SK-N-SH (cell line): ENCODE measurements at regions of chr5 and their contacts with region 1.

Region 1: DNA sequence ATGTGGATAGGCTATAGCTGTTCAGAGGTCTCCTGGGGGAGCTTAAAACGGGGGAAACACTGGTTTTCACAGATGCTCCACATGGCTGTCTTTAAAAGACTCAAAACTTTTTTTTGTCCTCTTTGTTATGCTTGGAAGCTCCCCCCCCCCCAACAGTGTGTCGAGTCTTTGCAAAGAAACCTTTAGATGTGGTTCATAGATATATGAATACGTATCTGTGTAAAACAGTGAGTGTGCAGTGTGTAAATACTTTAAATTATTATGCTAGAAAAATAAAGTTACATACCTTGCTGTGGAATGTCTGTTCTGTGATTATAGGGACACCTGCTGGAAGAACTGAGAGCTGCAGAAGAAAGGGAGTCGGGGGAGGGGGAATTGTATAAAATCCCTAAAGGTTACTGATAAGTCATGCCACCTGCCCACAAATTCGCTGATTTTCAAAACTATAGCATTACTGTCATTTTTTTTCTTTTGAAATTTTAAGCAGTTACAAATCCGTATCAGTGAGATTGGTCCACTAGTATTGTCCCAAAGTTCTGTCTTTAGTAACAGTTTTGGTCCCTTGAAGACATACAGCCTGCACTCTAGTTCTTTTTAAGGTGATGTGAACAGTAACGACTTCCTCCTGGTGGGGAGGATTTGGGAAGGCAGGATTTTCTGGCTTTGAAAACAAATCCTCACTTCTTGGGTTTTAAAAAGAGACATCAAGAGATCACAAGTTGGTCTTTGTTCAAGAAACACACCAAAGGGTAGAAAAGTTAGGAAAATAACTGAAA is 22.9 kb downstream of the RGMB start:
- DNase-seq: peak; percentile 68
- H3K4me3 ChIP-seq: no peak overlapping the region; a peak in 1 of 4 replicates
- H3K27ac ChIP-seq: peak overlapping the region in 1 of 2 experiments; percentile 61; a peak in 2 of 4 replicates
- H3K4me1 ChIP-seq: peaks cover 0 to 28% of the 10 kb centered on the region in 2 experiments; a peak in 2 of 4 replicates
- H3K27me3 ChIP-seq: no peaks in the 10 kb centered on the region
- CTCF ChIP-seq: peak; percentile 85
- EP300 ChIP-seq: no peak; a peak in 1 of 4 replicates
- RAD21 ChIP-seq: peak; percentile 80

Region 2: DNA sequence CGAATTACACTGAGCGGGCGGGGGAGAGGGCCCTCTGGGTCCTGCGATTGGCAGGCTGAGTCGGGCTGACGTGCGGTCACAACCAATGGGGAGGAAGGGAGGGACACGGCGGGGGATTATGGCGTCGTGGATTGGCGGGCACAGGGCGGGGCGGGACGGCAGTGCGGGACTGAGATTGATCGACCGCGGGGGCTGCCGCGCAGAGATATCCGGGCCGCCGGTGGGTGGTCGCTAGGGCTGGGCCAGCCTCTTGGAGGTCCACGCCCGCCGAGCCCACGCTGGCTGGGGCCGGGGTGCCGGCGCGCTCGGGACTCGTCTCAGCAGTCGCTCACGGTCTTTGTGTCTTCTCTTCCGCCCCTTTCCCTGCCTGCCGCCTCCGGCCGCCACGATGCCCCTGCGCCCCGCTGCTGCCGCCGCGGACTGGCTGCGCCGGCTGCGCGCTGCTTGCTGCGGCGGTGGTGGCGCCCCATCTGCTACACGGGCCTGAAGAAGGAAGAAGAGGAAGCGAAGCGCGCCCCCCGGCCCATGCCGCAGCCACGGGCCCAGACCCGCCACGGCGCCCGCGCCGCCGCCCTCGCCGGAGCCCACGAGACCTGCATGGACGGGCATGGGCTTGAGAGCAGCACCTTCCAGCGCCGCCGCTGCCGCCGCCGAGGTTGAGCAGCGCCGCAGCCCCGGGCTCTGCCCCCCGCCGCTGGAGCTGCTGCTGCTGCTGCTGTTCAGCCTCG is 22.8 kb before region 1 on chr5 and contains the start of gene RGMB:
- CTCF ChIA-PET with region 1: interaction called, 409 read pairs
- POLR2A ChIA-PET with region 1: no interaction called
- DNase-seq: peak; percentile 97
- H3K4me3 ChIP-seq: peak within 1 kb of the TSS; percentile 83 to 90
- H3K27ac ChIP-seq: peak within 1 kb of the TSS; percentile 91 to 96
- H3K4me1 ChIP-seq: peaks cover 9 to 14% of the 10 kb centered on the region in 2 experiments; a peak in 3 of 4 replicates
- H3K27me3 ChIP-seq: no peaks in the 10 kb centered on the region
- CTCF ChIP-seq: peak; percentile 15; the same call in 1 of the 2 replicates
- EP300 ChIP-seq: no peak
- RAD21 ChIP-seq: no peak
- polyA plus RNA-seq, gene RGMB: 72.6 and 86.7 TPM in 2 replicates

Region 3: DNA sequence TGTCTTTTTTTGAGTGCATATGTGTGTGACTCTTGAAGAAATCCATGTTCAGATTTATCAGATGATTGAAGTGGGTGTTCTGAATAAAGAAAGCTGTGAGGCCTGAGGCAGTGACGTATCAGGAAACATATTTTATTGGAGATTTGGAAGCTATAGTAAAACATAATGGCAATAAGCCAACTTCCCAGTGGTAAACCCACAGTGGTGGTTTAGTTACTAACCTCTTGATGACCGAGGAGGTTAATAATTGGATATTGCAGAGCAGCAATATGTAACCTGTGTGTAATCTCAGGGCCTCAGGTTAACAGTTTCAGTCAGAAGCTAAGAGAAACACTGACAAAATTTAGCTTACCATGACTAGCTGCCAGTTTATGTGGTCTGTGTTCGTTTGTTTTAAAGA is 16.0 kb before region 1 on chr5:
- CTCF ChIA-PET with region 1: interaction called, 409 read pairs
- POLR2A ChIA-PET with region 1: no interaction called
- DNase-seq: no peak
- H3K4me3 ChIP-seq: no peak overlapping the region
- H3K27ac ChIP-seq: peak overlapping the region in 1 of 2 experiments; percentile 24; a peak in 1 of 4 replicates
- H3K4me1 ChIP-seq: peaks cover 14 to 59% of the 10 kb centered on the region in 2 experiments; a peak in 3 of 4 replicates
- H3K27me3 ChIP-seq: no peaks in the 10 kb centered on the region
- CTCF ChIP-seq: no peak
- EP300 ChIP-seq: no peak
- RAD21 ChIP-seq: no peak

Region 4: DNA sequence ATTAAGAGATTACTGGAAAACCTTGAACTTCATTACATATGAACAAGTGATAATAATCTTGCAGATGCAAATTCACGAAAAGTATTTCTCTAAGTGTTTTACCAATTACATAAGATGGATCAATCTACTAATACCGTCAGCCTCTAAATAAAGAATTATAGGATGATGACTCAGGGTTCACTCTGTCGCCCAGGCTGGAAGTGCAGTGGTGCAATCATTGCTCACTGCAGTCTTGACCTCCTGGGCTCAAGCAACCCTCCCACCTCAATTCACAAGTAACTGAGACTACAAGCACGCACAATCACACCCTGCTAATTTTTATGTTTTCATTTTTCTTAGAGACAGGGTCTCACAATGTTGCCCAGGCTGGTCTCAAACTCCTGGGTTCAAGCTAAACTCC is 76.3 kb after region 1 on chr5:
- CTCF ChIA-PET with region 1: no interaction called
- POLR2A ChIA-PET with region 1: no interaction called
- DNase-seq: no peak
- H3K4me3 ChIP-seq: no peak overlapping the region
- H3K27ac ChIP-seq: no peak overlapping the region
- H3K4me1 ChIP-seq: no peaks in the 10 kb centered on the region
- H3K27me3 ChIP-seq: no peaks in the 10 kb centered on the region
- CTCF ChIP-seq: no peak
- EP300 ChIP-seq: no peak
- RAD21 ChIP-seq: no peak